Activated T-helper 1 cell treated with anti-CD3 and anti-CD28 coated beads, Interleukin-12 subunit alpha, Interleukin-12 subunit beta, Interleukin-2, Interleukin-4 antibody, amounts not matched to agents 30 ng/mL and 10 ng/mL and 1 ng/mL, durations not matched to agents 14 hours and 24 hours and 36 hours (primary cell): ENCODE measurements at regions of chr9 and their contacts with region 1.

Region 1: DNA sequence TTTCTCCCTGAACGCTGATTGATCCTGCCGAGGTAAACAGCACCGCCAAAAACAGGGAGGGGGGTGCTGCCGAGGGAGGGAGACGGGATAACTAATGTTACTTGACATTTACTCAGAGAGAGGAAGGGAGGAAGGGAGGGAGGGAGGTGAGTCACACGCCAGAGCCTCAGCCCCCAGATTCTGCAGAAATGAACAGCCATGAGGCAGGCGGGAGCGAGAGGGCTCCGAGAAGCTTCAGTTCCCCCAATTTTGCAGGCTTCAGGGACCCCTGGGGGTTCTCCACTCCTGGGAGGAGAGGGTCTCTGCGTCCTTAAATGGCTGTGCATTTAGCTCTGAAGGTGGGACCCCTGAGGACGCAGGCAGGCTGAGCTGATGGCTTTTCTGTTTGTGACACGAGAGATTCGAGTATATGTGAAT is 59.1 kb upstream of the IER5L start:
- DNase-seq: no peak
- H3K4me3 Mint-ChIP-seq: peak overlapping the region; percentile 69
- H3K27ac Mint-ChIP-seq: peak overlapping the region; percentile 92
- H3K4me1 Mint-ChIP-seq: peaks cover 39% of the 10 kb centered on the region
- H3K27me3 Mint-ChIP-seq: no peaks in the 10 kb centered on the region

Region 2: DNA sequence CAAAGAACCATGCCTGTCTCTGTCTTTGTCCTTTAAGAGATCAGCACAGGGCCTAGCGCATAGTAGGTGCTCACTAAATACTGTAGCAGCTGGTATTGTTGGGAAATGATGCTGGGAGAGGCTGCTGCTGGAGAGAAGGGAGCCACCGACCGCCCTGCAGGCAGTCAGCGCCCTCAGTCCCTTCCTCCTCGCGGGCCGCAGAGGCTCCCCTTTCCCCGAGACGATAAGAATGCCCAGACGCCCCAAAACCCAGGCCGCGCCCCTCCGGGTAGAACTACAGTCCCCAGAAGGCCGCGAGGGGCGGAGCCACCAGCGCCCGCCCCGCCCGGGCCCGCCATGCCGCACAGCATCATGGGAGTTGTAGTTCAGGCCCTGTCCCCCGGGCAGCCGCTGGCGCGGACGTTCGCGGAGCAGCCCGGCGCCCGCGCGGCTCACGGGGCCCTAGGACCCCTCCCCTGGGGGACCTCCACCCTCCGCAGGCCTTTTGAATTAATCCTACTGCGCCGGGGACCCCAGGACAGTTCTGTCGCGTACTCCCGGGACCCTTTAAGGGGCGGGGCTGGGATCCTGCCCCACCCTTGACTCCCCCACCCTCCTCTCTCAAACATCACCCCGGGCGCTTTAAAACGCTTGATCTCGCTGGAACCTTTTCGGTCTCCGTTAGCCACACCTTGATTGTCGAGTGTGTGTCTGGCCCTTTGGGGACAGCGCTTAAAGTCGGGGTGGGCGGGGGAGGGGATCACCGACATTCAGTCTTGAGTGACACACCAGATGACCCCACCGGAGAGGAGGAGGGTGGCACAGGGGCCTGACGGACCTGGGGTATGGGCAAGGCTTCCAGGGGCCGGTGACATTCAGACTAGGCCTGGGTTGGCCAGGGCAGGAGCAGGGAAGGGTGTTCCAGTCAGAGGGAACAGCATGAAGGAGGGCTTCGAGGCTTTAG is 34.3 kb before region 1 on chr9:
- intact Hi-C with region 1: loop called (anchors 5 kb)
- DNase-seq: peak; percentile 90
- H3K4me3 Mint-ChIP-seq: peak overlapping the region; percentile 66
- H3K27ac Mint-ChIP-seq: peak overlapping the region; percentile 73
- H3K4me1 Mint-ChIP-seq: peaks cover 6% of the 10 kb centered on the region
- H3K27me3 Mint-ChIP-seq: peaks cover 8% of the 10 kb centered on the region

Region 3: DNA sequence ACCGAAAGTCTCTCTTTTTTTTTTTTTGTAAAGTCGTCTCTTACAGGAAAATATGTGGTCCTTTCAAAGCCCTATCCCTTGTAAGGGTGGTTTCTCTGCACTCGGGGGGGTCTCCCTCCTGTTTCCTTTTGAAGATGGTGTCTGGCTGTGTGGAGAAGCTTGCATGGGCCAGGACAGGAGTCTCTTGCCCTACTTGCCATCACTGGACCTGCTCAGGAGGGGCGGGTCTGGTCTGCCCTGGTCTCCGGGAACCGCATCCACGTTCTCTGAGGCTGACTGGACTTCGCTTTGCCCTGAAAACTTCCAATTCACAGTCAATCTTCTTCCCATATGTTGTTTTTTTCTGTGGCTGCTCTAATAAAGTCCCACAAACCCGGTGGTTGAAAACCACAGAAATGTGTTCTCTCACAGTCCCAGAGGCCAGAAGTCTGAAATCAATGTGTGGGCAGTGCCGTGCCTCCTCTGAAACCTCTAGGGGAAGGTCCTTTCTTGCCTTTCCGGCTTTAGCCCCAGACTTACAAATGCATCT is 33.8 kb after region 1 on chr9:
- intact Hi-C with region 1: loop called (anchors 2 kb)
- DNase-seq: no peak
- H3K4me3 Mint-ChIP-seq: peak overlapping the region; percentile 63
- H3K27ac Mint-ChIP-seq: peak overlapping the region; percentile 72
- H3K4me1 Mint-ChIP-seq: peaks cover 29% of the 10 kb centered on the region
- H3K27me3 Mint-ChIP-seq: peaks cover 14% of the 10 kb centered on the region

Region 4: DNA sequence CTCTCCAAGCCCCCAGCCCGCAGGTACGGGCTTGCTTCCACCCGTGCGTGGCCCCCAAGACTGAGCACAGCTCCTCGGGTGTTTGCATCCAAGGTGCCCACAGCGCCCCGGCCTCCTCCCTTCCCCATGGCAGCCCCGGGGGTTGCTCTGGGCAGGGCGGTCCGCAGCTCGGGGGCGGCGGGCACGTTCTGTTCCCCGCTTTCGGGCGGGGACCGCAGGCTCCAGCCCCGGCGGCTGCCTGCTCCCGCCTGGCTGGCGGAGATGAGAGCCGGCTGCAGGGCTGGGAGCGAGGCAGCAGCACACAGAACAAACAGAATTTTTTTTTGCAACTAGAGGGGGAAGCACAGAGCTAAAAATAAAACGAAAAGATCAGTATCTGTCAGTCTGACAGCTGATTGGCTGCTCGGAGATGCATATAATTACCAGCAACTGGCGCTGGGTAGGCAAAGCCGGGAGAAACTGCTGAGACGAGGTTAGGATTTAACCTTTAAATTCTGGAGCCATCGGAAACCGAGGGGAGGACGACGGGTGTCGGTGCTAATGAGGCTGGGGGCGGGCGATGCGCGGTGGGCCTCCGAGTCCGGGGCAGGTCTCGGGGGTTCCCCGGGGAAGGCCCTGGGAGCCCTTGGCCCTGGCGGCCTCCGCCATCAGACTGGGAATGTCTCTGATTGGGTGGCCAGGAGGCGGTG is 83.5 kb after region 1 on chr9:
- intact Hi-C with region 1: loop called (anchors 5 kb)
- DNase-seq: peak; percentile 42
- H3K4me3 Mint-ChIP-seq: peak overlapping the region; percentile 77
- H3K27ac Mint-ChIP-seq: peak overlapping the region; percentile 81
- H3K4me1 Mint-ChIP-seq: peaks cover 19% of the 10 kb centered on the region
- H3K27me3 Mint-ChIP-seq: peaks cover 6% of the 10 kb centered on the region

Region 5: DNA sequence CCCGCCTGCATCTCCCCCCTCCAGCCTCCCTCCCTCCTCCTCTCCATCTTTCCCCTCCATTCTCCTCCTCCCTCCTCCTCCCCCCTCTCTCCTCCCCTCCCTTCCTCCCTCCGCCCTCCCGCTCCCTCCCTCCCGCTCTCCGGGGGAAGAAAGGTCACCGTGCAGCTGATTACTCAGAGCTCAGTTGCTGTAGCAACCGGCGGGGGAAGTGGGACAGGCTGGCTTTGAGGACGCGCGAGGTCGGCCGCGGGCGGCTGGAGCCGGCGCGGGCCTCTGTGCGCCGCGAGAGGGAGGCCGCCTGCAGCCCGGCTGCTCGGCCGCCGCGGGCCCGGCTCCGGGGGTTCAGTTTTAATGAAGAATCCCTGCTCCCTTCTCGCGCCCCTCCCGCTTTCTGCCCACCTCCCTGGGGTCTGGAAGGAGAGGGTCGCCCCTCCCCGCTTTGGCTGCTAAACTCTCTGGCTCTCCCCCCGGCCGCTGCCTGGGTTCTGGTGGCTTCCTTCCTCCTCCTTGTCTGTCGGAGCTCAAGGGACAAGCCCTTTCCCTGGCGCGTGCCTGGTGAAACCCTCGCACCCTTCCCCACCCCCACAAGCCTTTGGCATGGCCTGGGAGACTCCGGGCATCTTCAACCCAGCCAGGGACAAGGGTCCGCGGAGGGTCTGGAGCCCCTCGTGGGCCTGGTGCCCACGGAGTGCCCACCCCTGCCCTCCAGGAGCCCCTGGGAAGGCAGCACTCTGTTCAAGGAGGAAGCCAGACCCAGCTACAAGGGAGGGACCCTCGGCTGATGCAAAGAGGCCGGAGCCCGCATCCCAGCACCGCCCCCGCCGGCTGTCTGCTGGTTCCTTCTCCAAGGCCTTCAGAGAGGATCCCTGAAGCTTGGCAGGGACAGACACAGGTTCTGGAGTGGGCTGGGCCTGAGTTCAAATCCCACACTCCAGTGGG is 223.4 kb after region 1 on chr9:
- intact Hi-C with region 1: loop called (anchors 2 kb)
- DNase-seq: peak; percentile 83
- H3K4me3 Mint-ChIP-seq: peak overlapping the region; percentile 74
- H3K27ac Mint-ChIP-seq: peak overlapping the region; percentile 91
- H3K4me1 Mint-ChIP-seq: peaks cover 39% of the 10 kb centered on the region
- H3K27me3 Mint-ChIP-seq: peaks cover 1% of the 10 kb centered on the region